ENCODE measurements at regions of chr13 and their contacts with region 1.

Region 1: GRCh38 chr13:33723772-33724435 is 94.0 kb upstream of the RFC3 start:
- DNase-seq: peak; percentile 84
- H3K4me3 Mint-ChIP-seq: no peak overlapping the region
- H3K27ac Mint-ChIP-seq: no peak overlapping the region
- H3K4me1 Mint-ChIP-seq: peaks cover 15% of the 10 kb centered on the region
- H3K27me3 Mint-ChIP-seq: no peaks in the 10 kb centered on the region
- CTCF ChIP-seq: peak; percentile 78

Region 2: DNA sequence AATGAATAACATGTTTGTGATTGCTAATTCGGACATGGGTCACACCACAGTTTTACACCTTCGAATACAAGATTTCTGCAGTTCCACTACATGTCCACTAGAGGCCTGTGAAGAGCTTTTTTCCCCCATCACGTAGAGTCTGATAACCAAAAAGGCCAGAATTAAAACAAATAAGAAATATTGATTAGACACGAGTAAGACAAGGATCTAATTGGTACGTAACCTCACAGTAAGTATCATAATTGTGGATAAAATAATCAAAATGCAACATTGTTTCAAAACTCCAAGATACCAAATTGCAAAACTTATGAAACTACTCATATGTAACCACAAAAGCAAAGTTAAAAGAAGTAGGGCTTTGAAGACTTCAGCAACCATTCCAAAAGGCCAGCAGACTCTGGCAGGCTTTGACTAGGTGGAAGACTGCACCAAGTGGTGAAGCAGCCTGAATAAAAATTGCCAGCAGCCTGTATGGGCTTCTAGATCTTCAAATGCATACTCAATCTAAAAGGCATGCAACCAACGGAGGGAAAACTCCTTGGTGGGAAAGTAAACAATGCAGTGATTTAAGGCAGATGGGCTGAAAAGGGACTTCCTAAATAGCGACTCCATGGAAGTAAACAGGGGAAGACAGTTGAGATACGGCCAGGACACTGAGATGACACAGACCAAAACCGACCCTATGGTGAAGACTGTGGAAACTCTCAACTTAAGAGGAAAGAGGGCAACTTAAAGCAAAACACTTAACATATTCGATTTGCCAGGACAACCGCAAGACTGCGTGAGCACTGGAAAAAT is 495.1 kb before region 1 on chr13:
- CTCF ChIA-PET with region 1: interaction called, 4 read pairs
- POLR2A ChIA-PET with region 1: interaction called, 7 read pairs
- intact Hi-C with region 1: loop called (anchors 5 kb)
- DNase-seq: peak; percentile 61
- H3K4me3 Mint-ChIP-seq: peak overlapping the region; percentile 9
- H3K27ac Mint-ChIP-seq: peak overlapping the region; percentile 46
- H3K4me1 Mint-ChIP-seq: peaks cover 49% of the 10 kb centered on the region
- H3K27me3 Mint-ChIP-seq: no peaks in the 10 kb centered on the region
- CTCF ChIP-seq: peak; percentile 89

Region 3: DNA sequence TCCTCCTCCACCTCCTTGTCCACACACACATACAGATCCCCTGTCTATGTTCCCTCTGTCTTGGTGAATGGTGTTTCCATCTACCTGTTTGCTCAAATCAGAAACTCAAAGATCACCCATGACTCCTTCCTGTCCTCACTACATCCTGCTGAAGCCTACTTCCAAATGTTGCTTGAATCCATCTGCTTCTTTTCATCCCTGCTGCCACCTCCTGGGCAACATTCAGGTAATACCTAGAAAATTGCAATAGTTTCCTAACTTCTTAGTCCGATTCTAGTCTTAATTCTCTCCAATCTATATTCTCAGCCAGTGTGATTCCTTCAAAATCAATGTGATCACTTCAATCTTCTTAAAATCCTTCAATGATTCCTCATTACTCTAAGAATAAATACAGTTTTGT is 282.9 kb before region 1 on chr13:
- CTCF ChIA-PET with region 1: interaction called, 3 read pairs
- POLR2A ChIA-PET with region 1: no interaction called
- intact Hi-C with region 1: loop called (anchors 10 kb)
- DNase-seq: peak; percentile 58
- H3K4me3 Mint-ChIP-seq: no peak overlapping the region
- H3K27ac Mint-ChIP-seq: peak overlapping the region; percentile 3
- H3K4me1 Mint-ChIP-seq: peaks cover 6% of the 10 kb centered on the region
- H3K27me3 Mint-ChIP-seq: no peaks in the 10 kb centered on the region
- CTCF ChIP-seq: peak; percentile 38

Region 4: DNA sequence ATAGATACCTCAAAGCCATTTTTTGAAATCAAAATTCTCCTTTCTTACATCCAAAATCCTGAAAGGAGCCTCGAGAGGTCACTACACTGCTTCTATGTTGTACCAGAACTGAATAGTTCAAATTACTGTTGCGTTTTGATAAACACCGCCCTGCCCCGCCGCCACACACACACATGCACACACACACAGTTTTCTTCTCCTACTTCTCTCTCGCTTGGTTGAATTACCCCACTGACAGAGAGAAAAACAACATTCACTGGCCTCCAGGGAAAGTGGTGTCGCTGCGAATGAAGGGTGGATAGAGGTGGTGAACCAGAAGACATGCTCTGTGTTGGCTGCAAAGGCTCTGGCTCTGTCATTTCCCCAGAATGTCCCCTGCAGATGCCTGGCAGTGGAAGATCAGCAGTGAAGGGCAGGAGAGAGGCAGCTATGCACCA is 89.3 kb before region 1 on chr13:
- CTCF ChIA-PET with region 1: interaction called, 28 read pairs
- POLR2A ChIA-PET with region 1: interaction called, 19 read pairs
- intact Hi-C with region 1: loop called (anchors 10 kb)
- DNase-seq: peak; percentile 17
- H3K4me3 Mint-ChIP-seq: peak overlapping the region; percentile 41
- H3K27ac Mint-ChIP-seq: peak overlapping the region; percentile 89
- H3K4me1 Mint-ChIP-seq: peaks cover 40% of the 10 kb centered on the region
- H3K27me3 Mint-ChIP-seq: no peaks in the 10 kb centered on the region
- CTCF ChIP-seq: no peak

Region 5: GRCh38 chr13:35157143-35157755 is 1433.3 kb after region 1 on chr13:
- CTCF ChIA-PET with region 1: interaction called, 3 read pairs
- POLR2A ChIA-PET with region 1: no interaction called
- intact Hi-C with region 1: loop called (anchors 10 kb)
- DNase-seq: peak; percentile 73
- H3K4me3 Mint-ChIP-seq: no peak overlapping the region
- H3K27ac Mint-ChIP-seq: no peak overlapping the region
- H3K4me1 Mint-ChIP-seq: no peaks in the 10 kb centered on the region
- H3K27me3 Mint-ChIP-seq: no peaks in the 10 kb centered on the region
- CTCF ChIP-seq: peak; percentile 57

Measured in MCF 10A (cell line).